Esophagus squamous epithelium (tissue), 5 donors: ENCODE measurements at regions of chr4 and their contacts with region 1.

Region 1: GRCh38 chr4:22410645-22411247 is 105.1 kb downstream of the ADGRA3 start:
- DNase-seq: no peak
- H3K4me3 ChIP-seq: no peak overlapping the region
- H3K27ac ChIP-seq: no peak overlapping the region
- H3K4me1 ChIP-seq: no peaks in the 10 kb centered on the region
- H3K27me3 ChIP-seq: no peaks in the 10 kb centered on the region
- CTCF ChIP-seq: peak in 5 of 6 experiments; percentile 13 to 59 (median 43)
- POLR2A ChIP-seq: no peak

Region 2: GRCh38 chr4:22614114-22614513 is 203.4 kb after region 1 on chr4:
- intact Hi-C with region 1: loop called (anchors 10 kb)
- DNase-seq: no peak
- H3K4me3 ChIP-seq: no peak overlapping the region
- H3K27ac ChIP-seq: no peak overlapping the region
- H3K4me1 ChIP-seq: no peaks in the 10 kb centered on the region
- H3K27me3 ChIP-seq: no peaks in the 10 kb centered on the region
- CTCF ChIP-seq: no peak
- POLR2A ChIP-seq: no peak

Region 3: DNA sequence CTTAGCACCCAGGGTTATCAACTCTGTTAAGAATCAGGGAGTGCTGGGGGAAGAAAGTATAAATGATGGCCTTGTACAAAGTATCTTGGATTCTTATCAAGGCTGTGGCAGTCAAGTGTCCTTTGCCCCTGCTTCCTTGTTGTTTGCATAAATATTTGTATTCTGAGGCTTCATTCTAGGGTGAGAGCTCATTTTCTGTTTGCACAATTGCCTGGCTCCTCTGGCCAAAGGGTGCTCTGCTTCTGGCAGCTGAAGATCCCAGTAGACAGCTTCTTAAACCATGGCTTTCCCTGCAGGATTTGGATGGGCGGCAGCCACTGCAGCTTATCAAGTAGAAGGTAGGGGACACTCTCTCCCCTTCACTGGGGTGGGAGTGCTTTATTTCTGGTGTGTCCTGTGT is 282.0 kb after region 1 on chr4 and contains the start of gene GBA3:
- intact Hi-C with region 1: loop called (anchors 5 kb)
- DNase-seq: no peak
- H3K4me3 ChIP-seq: no peak within 1 kb of the TSS
- H3K27ac ChIP-seq: no peak within 1 kb of the TSS
- H3K4me1 ChIP-seq: no peaks in the 10 kb centered on the region
- H3K27me3 ChIP-seq: peaks cover 0 to 55% (median 0%) of the 10 kb centered on the region in 4 donors
- CTCF ChIP-seq: no peak
- POLR2A ChIP-seq: no peak
- total RNA-seq, gene GBA3: not detected